ENCODE measurements at regions of chr1 and their contacts with region 1.

Region 1: GRCh38 chr1:109041621-109042468 is at the start of gene WDR47:
- DNase-seq: peak; percentile 95 to 98 (median 97)
- ATAC-seq: peak; percentile 97 to 99 (median 98)
- H3K4me3 ChIP-seq: peak within 1 kb of the TSS; percentile 75 to 100 (median 96)
- H3K27ac ChIP-seq: peak within 1 kb of the TSS; percentile 72 to 94 (median 86)
- H3K4me1 ChIP-seq: peaks cover 0 to 18% (median 9%) of the 10 kb centered on the region in 12 donors
- H3K27me3 ChIP-seq: no peaks in the 10 kb centered on the region
- CTCF ChIP-seq: peak in 2 of 12 donors; percentile 8 to 19
- POLR2A ChIP-seq: peak; percentile 81 to 97
- total RNA-seq, gene WDR47: 12.2 to 22.3 (median 14.9) TPM

Region 2: GRCh38 chr1:108639899-108640560 is 401.8 kb before region 1 on chr1:
- intact Hi-C with region 1: no loop called
- DNase-seq: no peak
- ATAC-seq: no peak
- H3K4me3 ChIP-seq: no peak overlapping the region
- H3K27ac ChIP-seq: no peak overlapping the region
- H3K4me1 ChIP-seq: peaks cover 0 to 17% (median 0%) of the 10 kb centered on the region in 12 donors
- H3K27me3 ChIP-seq: no peaks in the 10 kb centered on the region
- CTCF ChIP-seq: no peak
- POLR2A ChIP-seq: no peak

Region 3: DNA sequence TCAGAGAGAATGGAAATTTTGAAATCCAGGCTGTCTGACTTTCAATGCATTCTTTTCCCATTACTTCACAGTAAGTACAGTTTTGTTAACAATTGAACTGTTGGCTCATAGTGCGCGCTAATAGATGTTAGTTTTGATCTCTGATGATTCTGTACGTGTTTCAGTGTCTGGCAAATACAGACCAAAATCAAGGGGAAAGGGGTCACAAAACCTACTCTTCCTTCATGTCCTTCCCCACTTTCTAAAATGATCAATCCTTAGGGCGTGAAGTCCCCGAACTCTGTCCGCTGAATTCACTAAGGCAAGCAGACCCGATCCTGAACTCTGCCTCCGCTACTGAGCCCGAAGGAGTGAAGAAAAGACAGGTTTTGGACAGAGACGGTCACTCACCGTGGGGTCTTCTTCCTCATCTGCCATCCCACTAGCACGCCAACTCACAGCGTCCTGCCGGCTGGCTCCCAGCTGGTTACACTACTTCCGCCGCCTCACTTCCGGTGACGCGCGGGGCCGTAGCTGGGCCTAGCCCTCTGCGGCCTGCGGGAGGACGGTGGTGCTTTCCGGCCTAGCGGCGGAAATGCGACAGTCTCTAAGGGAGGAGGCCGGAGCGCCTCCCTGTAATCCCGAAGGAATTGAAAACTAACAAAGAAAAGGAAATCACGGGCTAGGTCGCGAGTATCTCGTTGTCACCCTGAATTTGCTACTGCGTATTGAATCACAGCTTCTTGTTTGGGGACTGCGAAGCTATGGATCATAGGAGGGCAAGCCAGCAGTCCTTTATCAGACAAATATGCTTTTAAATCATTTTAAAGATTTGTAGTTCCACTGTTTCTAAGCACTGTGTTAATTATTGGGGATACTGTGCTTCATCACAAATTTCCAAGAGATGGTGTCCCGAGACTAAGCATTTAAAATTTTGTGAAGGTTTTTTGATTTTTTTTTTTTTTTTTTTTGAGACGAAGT is 34.0 kb after region 1 on chr1 and contains the start of gene TAF13:
- intact Hi-C with region 1: loop called in 3 of 10 experiments (anchors 2 to 5 kb)
- DNase-seq: peak; percentile 97 to 98 (median 97)
- ATAC-seq: peak; percentile 99 to 100 (median 100)
- H3K4me3 ChIP-seq: peak within 1 kb of the TSS; percentile 40 to 84 (median 70)
- H3K27ac ChIP-seq: peak within 1 kb of the TSS; percentile 82 to 97 (median 92)
- H3K4me1 ChIP-seq: peaks cover 3 to 27% (median 20%) of the 10 kb centered on the region in 12 donors
- H3K27me3 ChIP-seq: no peaks in the 10 kb centered on the region
- CTCF ChIP-seq: peak in 6 of 12 donors; percentile 14 to 43 (median 35)
- POLR2A ChIP-seq: peak; percentile 77 to 83
- total RNA-seq, gene TAF13: 34.8 to 72.1 (median 55.4) TPM

Region 4: GRCh38 chr1:109090196-109091077 is 48.6 kb after region 1 on chr1 and contains the start of gene TMEM167B:
- intact Hi-C with region 1: loop called in 2 of 10 experiments (anchors 5 kb)
- DNase-seq: peak; percentile 92 to 96 (median 94)
- ATAC-seq: peak; percentile 90 to 97 (median 94)
- H3K4me3 ChIP-seq: peak within 1 kb of the TSS; percentile 56 to 95 (median 88)
- H3K27ac ChIP-seq: peak within 1 kb of the TSS; percentile 93 to 99 (median 98)
- H3K4me1 ChIP-seq: peaks cover 0 to 51% (median 24%) of the 10 kb centered on the region in 12 donors
- H3K27me3 ChIP-seq: no peaks in the 10 kb centered on the region
- CTCF ChIP-seq: no peak
- POLR2A ChIP-seq: peak in 1 of 2 donors; percentile 77
- total RNA-seq, gene TMEM167B: 14.1 to 52.9 (median 29.9) TPM

Region 5: GRCh38 chr1:109099938-109100773 is 58.3 kb after region 1 on chr1:
- intact Hi-C with region 1: loop called in 2 of 10 experiments (anchors 2 to 5 kb)
- DNase-seq: peak; percentile 97 to 98 (median 98)
- ATAC-seq: peak; percentile 97 to 99 (median 97)
- H3K4me3 ChIP-seq: peak overlapping the region; percentile 70 to 100 (median 94)
- H3K27ac ChIP-seq: peak overlapping the region; percentile 92 to 100 (median 98)
- H3K4me1 ChIP-seq: peaks cover 0 to 32% (median 20%) of the 10 kb centered on the region in 12 donors
- H3K27me3 ChIP-seq: no peaks in the 10 kb centered on the region
- CTCF ChIP-seq: peak; percentile 73 to 98 (median 87)
- POLR2A ChIP-seq: peak; percentile 67 to 95